CD8-positive, alpha-beta T cell (primary cell): ENCODE measurements at regions of chr19 and their contacts with region 1.

Region 1: GRCh38 chr19:46924874-46925547 is 64.2 kb downstream of the ARHGAP35 start:
- DNase-seq: peak in 6 of 9 experiments; percentile 11 to 58 (median 18)
- ATAC-seq: peak; percentile 49
- H3K4me3 ChIP-seq: no peak overlapping the region
- H3K4me3 Mint-ChIP-seq: peak overlapping the region; percentile 58
- H3K27ac ChIP-seq: peak overlapping the region in 1 of 2 experiments; percentile 34
- H3K27ac Mint-ChIP-seq: peak overlapping the region; percentile 70
- H3K4me1 ChIP-seq: peaks cover 17% of the 10 kb centered on the region
- H3K4me1 Mint-ChIP-seq: peaks cover 54% of the 10 kb centered on the region
- H3K27me3 ChIP-seq: no peaks in the 10 kb centered on the region
- H3K27me3 Mint-ChIP-seq: no peaks in the 10 kb centered on the region
- CTCF ChIP-seq: no peak

Region 2: DNA sequence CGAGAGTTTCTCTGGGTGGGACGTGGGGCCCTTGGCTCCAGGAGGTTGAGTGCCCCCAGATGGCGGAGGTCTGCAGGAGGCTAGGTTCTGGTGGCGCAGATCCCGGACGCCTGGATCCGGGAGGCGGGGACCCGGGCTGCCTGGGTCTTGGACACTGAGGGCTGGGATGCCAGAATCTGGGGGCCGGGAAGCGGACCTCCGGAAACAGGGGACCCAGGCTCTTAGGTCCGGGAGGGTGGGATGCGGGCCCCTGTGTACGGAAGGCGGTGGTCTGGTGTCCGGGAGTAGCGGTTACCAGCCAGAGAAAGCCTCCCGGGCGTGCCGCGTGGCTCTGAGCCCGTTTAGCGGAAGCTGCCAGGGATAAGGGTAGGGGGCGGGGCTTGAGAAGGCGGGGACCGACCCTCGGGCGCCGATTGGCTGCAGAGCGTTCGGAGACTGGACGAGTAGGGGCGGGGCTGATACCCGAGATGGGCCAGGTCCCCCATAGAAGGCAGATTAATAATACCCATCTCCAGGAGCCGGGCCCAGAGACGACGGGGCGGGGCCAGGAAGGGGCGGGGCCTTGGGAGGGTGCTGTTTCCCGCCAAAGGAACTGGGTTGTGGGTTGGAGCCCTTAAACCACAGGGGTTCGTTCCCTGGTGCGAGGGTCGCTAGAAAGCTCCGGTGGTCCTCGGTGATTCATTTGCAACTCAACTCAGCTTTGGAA is 136.6 kb before region 1 on chr19 and contains the start of gene SLC1A5:
- CTCF ChIA-PET with region 1: no interaction called
- POLR2A ChIA-PET with region 1: no interaction called
- intact Hi-C with region 1: no loop called
- DNase-seq: peak; percentile 91 to 98 (median 96)
- ATAC-seq: peak; percentile 76
- H3K4me3 ChIP-seq: peak within 1 kb of the TSS; percentile 67 to 85
- H3K4me3 Mint-ChIP-seq: peak within 1 kb of the TSS; percentile 85
- H3K27ac ChIP-seq: peak within 1 kb of the TSS; percentile 51 to 69
- H3K27ac Mint-ChIP-seq: peak within 1 kb of the TSS; percentile 79
- H3K4me1 ChIP-seq: peaks cover 60% of the 10 kb centered on the region
- H3K4me1 Mint-ChIP-seq: peaks cover 59% of the 10 kb centered on the region
- H3K27me3 ChIP-seq: no peaks in the 10 kb centered on the region
- H3K27me3 Mint-ChIP-seq: no peaks in the 10 kb centered on the region
- CTCF ChIP-seq: no peak
- total RNA-seq, gene SLC1A5: 16.6 to 17.4 TPM

Region 3: DNA sequence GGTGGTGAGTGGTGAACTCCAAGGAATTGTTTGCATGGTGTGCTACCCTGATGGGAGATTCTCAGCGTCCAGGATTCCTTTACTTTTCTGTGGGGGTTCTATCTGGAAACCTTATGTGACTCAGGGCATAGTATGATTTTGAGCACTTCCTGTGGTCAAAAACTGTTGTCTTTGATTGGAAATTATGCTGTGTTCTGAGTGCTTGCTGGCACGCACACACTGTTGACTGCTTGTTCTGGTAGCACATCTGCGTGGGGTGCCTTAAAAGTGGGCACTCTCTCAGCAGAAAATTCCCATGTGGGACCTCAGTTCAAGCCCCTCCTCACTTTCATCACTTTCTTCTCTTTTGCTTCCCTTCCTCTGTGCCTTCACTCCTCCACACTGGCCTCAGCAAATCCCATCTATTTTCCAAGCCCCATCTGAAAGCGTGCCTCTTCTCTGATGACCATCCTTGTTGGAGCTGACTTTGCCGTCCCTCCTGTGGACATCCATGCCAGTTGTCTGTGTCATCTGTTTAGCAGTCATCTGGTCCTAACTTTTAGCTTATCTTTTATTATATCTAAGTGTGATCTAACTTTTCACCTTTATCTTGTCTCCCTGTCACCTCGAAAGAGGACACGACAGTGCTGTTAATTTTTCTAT is 38.2 kb after region 1 on chr19:
- CTCF ChIA-PET with region 1: no interaction called
- POLR2A ChIA-PET with region 1: no interaction called
- intact Hi-C with region 1: loop called in 1 of 2 experiments (anchors 5 kb)
- DNase-seq: no peak
- ATAC-seq: no peak
- H3K4me3 ChIP-seq: no peak overlapping the region
- H3K4me3 Mint-ChIP-seq: no peak overlapping the region
- H3K27ac ChIP-seq: no peak overlapping the region
- H3K27ac Mint-ChIP-seq: peak overlapping the region; percentile 20
- H3K4me1 ChIP-seq: peaks cover 18% of the 10 kb centered on the region
- H3K4me1 Mint-ChIP-seq: peaks cover 46% of the 10 kb centered on the region
- H3K27me3 ChIP-seq: no peaks in the 10 kb centered on the region
- H3K27me3 Mint-ChIP-seq: no peaks in the 10 kb centered on the region
- CTCF ChIP-seq: no peak

Region 4: DNA sequence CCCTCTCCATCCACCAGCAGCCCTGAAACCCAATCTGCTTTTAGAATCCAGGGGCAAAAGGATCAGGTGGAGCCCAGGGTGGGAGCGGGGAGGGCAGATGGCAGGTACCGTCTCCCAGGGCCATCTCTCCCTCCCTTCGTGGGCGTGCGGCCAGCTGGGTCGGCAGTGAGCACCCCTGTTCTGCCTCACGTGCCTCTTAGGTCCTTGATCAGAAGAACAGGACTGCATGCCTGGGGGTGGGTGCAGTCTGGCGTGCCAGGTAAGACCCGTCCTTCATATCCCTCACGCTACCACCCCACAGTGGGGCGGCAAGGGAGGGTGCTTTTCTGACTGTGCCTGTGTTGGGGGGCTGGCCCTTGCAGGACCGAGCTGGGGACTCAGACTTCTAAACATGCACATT is 544.7 kb after region 1 on chr19:
- CTCF ChIA-PET with region 1: no interaction called
- POLR2A ChIA-PET with region 1: no interaction called
- intact Hi-C with region 1: no loop called
- DNase-seq: no peak
- ATAC-seq: no peak
- H3K4me3 ChIP-seq: no peak overlapping the region
- H3K4me3 Mint-ChIP-seq: no peak overlapping the region
- H3K27ac ChIP-seq: no peak overlapping the region
- H3K27ac Mint-ChIP-seq: no peak overlapping the region
- H3K4me1 ChIP-seq: peaks cover 6% of the 10 kb centered on the region
- H3K4me1 Mint-ChIP-seq: peaks cover 9% of the 10 kb centered on the region
- H3K27me3 ChIP-seq: peaks cover 26 to 49% of the 10 kb centered on the region in 2 experiments
- H3K27me3 Mint-ChIP-seq: peaks cover 52% of the 10 kb centered on the region
- CTCF ChIP-seq: no peak